ENCODE measurements at regions of chr6 and their contacts with region 1.

Region 1: GRCh38 chr6:42378125-42378524 is 73.6 kb downstream of the TRERF1 start:
- DNase-seq: peak; percentile 50
- CTCF ChIP-seq: no peak

Region 2: GRCh38 chr6:42367353-42368011 is 10.6 kb before region 1 on chr6:
- CTCF ChIA-PET with region 1: interaction called, 10 read pairs
- POLR2A ChIA-PET with region 1: no interaction called
- DNase-seq: peak; percentile 77
- CTCF ChIP-seq: no peak

Region 3: DNA sequence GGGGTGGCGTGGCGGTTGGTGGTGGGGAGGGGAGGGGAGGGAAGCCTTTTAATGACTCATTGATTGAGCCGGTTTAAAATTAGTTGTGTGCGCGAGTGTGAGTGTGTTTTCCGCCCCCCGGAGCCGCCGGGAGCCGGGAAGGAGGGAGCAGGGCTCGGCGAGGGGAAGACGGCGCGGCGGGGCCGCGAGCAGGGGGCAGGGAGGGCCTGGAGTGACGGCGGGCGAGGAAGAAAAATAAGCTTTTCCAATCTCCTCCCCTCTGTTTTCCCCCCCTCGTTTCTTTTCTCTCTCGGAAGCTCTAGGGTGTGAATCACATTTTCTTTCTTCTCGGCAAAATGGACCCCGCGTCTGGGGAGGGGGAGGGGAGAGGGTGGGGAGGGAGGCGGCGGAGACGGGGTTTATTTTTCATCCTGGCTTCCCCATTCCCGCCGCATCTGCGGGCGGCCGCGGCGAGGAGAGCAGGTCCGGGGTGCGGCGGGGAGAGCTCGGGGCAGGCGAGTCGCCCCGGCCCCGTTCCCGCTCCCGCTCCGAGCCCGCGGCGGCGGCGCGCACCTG is 404.6 kb after region 1 on chr6:
- CTCF ChIA-PET with region 1: no interaction called
- POLR2A ChIA-PET with region 1: no interaction called
- DNase-seq: peak; percentile 56
- CTCF ChIP-seq: no peak

Measured in GM10248 (cell line).